ENCODE measurements at regions of chr13 and their contacts with region 1.

Region 1: GRCh38 chr13:65638572-65639168 is 1591.5 kb downstream of the PCDH9 start:
- DNase-seq: peak; percentile 63
- ATAC-seq: peak; percentile 88
- H3K4me3 ChIP-seq: no peak overlapping the region
- H3K27ac ChIP-seq: no peak overlapping the region
- H3K4me1 ChIP-seq: no peaks in the 10 kb centered on the region
- H3K27me3 ChIP-seq: no peaks in the 10 kb centered on the region
- CTCF ChIP-seq: peak; percentile 85
- POLR2A ChIP-seq: no peak
- RAD21 ChIP-seq: peak; percentile 92

Region 2: GRCh38 chr13:64154514-64154913 is 1484.2 kb before region 1 on chr13:
- CTCF ChIA-PET with region 1: no interaction called
- POLR2A ChIA-PET with region 1: no interaction called
- dilution Hi-C with region 1: no loop called
- in situ Hi-C with region 1: loop called (anchors 25 kb)
- intact Hi-C with region 1: loop called (anchors 10 kb)
- DNase-seq: peak; percentile 40
- ATAC-seq: peak; percentile 62; the same call in 1 of the 2 replicates
- H3K4me3 ChIP-seq: no peak overlapping the region
- H3K27ac ChIP-seq: no peak overlapping the region
- H3K4me1 ChIP-seq: no peaks in the 10 kb centered on the region
- H3K27me3 ChIP-seq: no peaks in the 10 kb centered on the region
- CTCF ChIP-seq: peak; percentile 51
- POLR2A ChIP-seq: no peak
- RAD21 ChIP-seq: peak; percentile 50

Region 3: DNA sequence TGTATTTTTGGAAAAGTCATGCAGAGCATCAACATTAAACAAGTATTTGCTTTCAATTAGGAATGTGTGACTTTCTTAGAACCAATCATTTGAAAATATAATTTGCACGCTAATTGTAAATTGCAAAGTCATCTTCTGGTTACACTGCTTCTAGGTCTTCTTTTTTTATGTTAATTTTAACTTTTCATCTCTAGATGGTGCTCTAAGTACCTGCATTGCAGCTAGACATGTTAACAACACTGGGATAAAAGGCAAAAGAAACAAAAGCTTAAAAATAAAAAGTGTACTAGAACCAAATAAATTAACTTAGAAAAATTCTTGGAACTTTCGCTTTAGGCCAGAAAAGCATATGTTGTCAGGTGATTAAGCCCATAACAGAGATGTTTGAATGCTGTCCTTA is 1166.8 kb before region 1 on chr13:
- CTCF ChIA-PET with region 1: interaction called, 3 read pairs
- POLR2A ChIA-PET with region 1: no interaction called
- dilution Hi-C with region 1: no loop called
- in situ Hi-C with region 1: loop called (anchors 10 kb)
- intact Hi-C with region 1: loop called (anchors 1 kb)
- DNase-seq: peak; percentile 60
- ATAC-seq: peak; percentile 69
- H3K4me3 ChIP-seq: no peak overlapping the region
- H3K27ac ChIP-seq: no peak overlapping the region
- H3K4me1 ChIP-seq: no peaks in the 10 kb centered on the region
- H3K27me3 ChIP-seq: no peaks in the 10 kb centered on the region
- CTCF ChIP-seq: peak; percentile 66
- POLR2A ChIP-seq: no peak
- RAD21 ChIP-seq: peak; percentile 90

Region 4: GRCh38 chr13:64540468-64540867 is 1098.2 kb before region 1 on chr13:
- CTCF ChIA-PET with region 1: no interaction called
- POLR2A ChIA-PET with region 1: no interaction called
- dilution Hi-C with region 1: no loop called
- in situ Hi-C with region 1: no loop called
- intact Hi-C with region 1: loop called (anchors 5 kb)
- DNase-seq: peak; percentile 11
- ATAC-seq: no peak
- H3K4me3 ChIP-seq: no peak overlapping the region
- H3K27ac ChIP-seq: no peak overlapping the region
- H3K4me1 ChIP-seq: no peaks in the 10 kb centered on the region
- H3K27me3 ChIP-seq: no peaks in the 10 kb centered on the region
- CTCF ChIP-seq: no peak
- POLR2A ChIP-seq: no peak
- RAD21 ChIP-seq: no peak

Region 5: GRCh38 chr13:64819081-64819480 is 819.6 kb before region 1 on chr13:
- CTCF ChIA-PET with region 1: no interaction called
- POLR2A ChIA-PET with region 1: no interaction called
- dilution Hi-C with region 1: no loop called
- in situ Hi-C with region 1: loop called (anchors 10 kb)
- intact Hi-C with region 1: loop called (anchors 1 kb)
- DNase-seq: peak; percentile 5
- ATAC-seq: no peak
- H3K4me3 ChIP-seq: no peak overlapping the region
- H3K27ac ChIP-seq: no peak overlapping the region
- H3K4me1 ChIP-seq: peaks cover 2% of the 10 kb centered on the region; the same call in 1 of the 2 replicates
- H3K27me3 ChIP-seq: no peaks in the 10 kb centered on the region
- CTCF ChIP-seq: no peak
- POLR2A ChIP-seq: no peak
- RAD21 ChIP-seq: no peak

Region 6: DNA sequence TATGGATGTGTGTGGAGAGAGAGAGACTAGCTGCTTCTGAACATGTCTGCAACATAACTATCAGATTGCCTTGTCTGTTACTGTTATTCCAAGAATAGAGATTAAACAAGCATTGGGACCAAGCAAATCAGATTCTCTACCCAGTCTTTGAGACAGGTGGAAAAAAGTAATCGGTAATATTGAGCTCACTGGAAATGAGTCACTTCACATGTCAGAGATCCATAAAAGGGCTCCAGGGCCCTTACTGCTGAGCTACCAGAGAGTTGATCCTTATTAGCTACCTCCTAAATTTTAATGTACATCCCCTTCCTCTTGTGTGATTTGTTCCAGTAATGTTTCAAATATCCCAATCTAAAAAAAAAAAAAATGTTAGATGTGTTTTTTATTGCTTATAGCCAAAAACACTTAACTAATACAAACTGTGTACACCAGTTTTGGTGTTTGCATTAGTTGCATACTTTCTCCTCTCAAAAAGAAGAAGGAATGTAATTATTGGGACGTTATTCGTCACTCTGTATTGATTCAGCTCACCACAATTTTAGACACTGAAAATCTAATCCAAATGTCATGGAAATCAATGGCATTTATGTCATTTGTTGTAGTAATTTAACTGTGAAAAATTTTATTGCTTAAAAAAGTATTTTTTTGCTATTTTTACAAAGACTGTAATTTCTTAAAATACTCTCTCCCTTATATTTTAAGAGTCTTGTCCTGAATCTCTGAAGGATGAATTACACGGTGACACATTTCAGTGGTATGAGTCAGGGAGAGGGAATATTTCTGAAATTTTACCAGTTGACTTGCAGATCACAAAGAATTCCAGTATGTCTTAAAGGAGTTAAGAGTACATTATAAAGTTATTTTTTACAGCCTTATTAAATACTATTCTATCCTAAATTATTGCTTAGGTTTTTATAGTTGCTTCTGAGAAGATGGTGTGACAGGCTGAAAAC is 526.3 kb before region 1 on chr13:
- CTCF ChIA-PET with region 1: no interaction called
- POLR2A ChIA-PET with region 1: interaction called, 6 read pairs
- dilution Hi-C with region 1: no loop called
- in situ Hi-C with region 1: no loop called
- intact Hi-C with region 1: loop called (anchors 10 kb)
- DNase-seq: peak; percentile 55
- ATAC-seq: peak; percentile 84
- H3K4me3 ChIP-seq: no peak overlapping the region
- H3K27ac ChIP-seq: no peak overlapping the region
- H3K4me1 ChIP-seq: peaks cover 2% of the 10 kb centered on the region; the same call in 1 of the 2 replicates
- H3K27me3 ChIP-seq: no peaks in the 10 kb centered on the region
- CTCF ChIP-seq: no peak
- POLR2A ChIP-seq: no peak
- RAD21 ChIP-seq: no peak

Region 7: DNA sequence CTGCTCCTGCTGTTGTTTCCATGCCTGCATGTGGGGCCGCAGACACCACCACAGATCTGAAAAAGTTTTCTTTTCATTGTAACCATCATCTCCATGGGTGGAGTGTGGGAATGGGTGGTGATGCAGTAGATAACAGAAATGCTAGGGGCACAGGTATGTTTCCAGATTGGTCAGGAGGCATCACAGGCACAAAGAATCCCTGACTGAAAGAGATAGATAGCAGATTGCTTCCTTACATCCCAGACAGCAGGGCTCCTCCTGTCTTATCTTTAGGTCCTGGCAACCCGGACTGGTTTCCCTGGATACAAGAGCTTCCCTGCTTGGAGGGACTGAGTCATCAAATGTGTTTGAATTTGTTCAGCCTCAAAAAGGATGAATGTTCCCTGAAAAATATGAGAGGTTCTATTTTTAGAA is 346.2 kb before region 1 on chr13:
- CTCF ChIA-PET with region 1: no interaction called
- POLR2A ChIA-PET with region 1: no interaction called
- dilution Hi-C with region 1: no loop called
- in situ Hi-C with region 1: no loop called
- intact Hi-C with region 1: loop called (anchors 10 kb)
- DNase-seq: peak; percentile 86
- ATAC-seq: peak; percentile 98
- H3K4me3 ChIP-seq: no peak overlapping the region
- H3K27ac ChIP-seq: no peak overlapping the region
- H3K4me1 ChIP-seq: peaks cover 2% of the 10 kb centered on the region; the same call in 1 of the 2 replicates
- H3K27me3 ChIP-seq: no peaks in the 10 kb centered on the region
- CTCF ChIP-seq: no peak
- POLR2A ChIP-seq: no peak
- RAD21 ChIP-seq: no peak

Region 8: GRCh38 chr13:65784088-65784816 is 145.6 kb after region 1 on chr13:
- CTCF ChIA-PET with region 1: no interaction called
- POLR2A ChIA-PET with region 1: no interaction called
- dilution Hi-C with region 1: no loop called
- in situ Hi-C with region 1: no loop called
- intact Hi-C with region 1: no loop called
- DNase-seq: no peak
- ATAC-seq: no peak
- H3K4me3 ChIP-seq: no peak overlapping the region
- H3K27ac ChIP-seq: no peak overlapping the region
- H3K4me1 ChIP-seq: no peaks in the 10 kb centered on the region
- H3K27me3 ChIP-seq: no peaks in the 10 kb centered on the region
- CTCF ChIP-seq: no peak
- POLR2A ChIP-seq: no peak
- RAD21 ChIP-seq: no peak